Sigmoid colon (tissue), 7 donors: ENCODE measurements at regions of chr2 and their contacts with region 1.

Region 1: GRCh38 chr2:203014456-203015199 is at the start of gene NBEAL1:
- DNase-seq: peak; percentile 99
- H3K4me3 ChIP-seq: peak within 1 kb of the TSS; percentile 82 to 92 (median 87)
- H3K27ac ChIP-seq: peak within 1 kb of the TSS; percentile 84 to 96 (median 95)
- H3K4me1 ChIP-seq: peaks cover 0 to 46% (median 28%) of the 10 kb centered on the region in 4 donors
- H3K27me3 ChIP-seq: no peaks in the 10 kb centered on the region
- CTCF ChIP-seq: no peak
- EP300 ChIP-seq: peak in 2 of 4 donors; percentile 66 to 67
- POLR2A ChIP-seq: peak; percentile 85 to 87
- total RNA-seq, gene NBEAL1: 22.7 to 39.1 (median 25.8) TPM

Region 2: GRCh38 chr2:202780514-202781021 is 234.1 kb before region 1 on chr2:
- intact Hi-C with region 1: no loop called
- DNase-seq: no peak
- H3K4me3 ChIP-seq: no peak overlapping the region
- H3K27ac ChIP-seq: no peak overlapping the region
- H3K4me1 ChIP-seq: no peaks in the 10 kb centered on the region
- H3K27me3 ChIP-seq: no peaks in the 10 kb centered on the region
- CTCF ChIP-seq: no peak
- EP300 ChIP-seq: no peak
- POLR2A ChIP-seq: no peak

Region 3: DNA sequence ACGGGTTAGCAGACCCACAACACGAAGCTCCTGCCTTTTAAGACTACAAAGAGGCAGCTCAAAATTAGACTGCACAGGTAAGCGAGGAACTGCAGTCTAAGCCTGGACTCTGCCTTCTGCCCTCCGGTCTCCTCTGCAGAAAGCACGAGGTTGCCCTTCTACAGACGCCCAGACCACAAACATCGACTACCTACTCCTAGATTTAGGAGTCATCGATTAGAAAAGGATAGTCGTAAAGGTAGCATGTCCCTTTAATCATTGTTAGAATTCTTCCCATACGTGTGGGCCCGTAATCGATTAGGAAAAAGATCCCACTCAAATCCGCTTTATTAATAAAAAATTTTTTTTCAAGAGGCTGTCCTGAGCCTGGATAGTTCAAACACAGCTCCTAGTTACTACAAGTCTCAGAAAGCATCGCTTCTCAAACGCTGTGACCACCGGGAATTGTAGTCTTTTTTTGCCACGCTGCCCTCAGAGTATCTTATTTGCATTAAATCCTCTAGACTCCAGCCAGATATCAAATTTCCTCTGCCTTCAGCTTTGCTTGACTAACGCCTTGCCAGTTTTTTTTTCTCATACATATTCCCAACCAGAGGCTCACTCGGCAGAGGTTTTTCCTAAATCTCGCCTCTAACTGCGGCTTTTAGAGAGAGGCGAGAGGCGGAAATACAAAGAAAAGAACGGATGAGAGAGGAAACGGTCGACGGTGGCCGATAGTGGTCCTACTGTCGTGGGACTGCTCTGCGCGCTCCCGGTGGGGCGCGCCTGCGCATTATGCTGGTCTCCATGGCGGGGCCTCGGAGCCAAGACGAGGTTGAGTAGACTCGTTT is 102.9 kb before region 1 on chr2 and contains the starts of genes CARF and WDR12:
- intact Hi-C with region 1: loop called (anchors 5 kb)
- DNase-seq: peak; percentile 96
- H3K4me3 ChIP-seq: peak within 1 kb of the TSS; percentile 55 to 78 (median 62)
- H3K27ac ChIP-seq: peak within 1 kb of the TSS; percentile 83 to 88 (median 86)
- H3K4me1 ChIP-seq: peaks cover 0 to 29% (median 18%) of the 10 kb centered on the region in 4 donors
- H3K27me3 ChIP-seq: no peaks in the 10 kb centered on the region
- CTCF ChIP-seq: no peak
- EP300 ChIP-seq: no peak
- POLR2A ChIP-seq: peak; percentile 53 to 55
- total RNA-seq, gene CARF: 15.9 to 23.5 (median 18.9) TPM
- total RNA-seq, gene WDR12: 3.3 to 23.0 (median 10.9) TPM

Region 4: DNA sequence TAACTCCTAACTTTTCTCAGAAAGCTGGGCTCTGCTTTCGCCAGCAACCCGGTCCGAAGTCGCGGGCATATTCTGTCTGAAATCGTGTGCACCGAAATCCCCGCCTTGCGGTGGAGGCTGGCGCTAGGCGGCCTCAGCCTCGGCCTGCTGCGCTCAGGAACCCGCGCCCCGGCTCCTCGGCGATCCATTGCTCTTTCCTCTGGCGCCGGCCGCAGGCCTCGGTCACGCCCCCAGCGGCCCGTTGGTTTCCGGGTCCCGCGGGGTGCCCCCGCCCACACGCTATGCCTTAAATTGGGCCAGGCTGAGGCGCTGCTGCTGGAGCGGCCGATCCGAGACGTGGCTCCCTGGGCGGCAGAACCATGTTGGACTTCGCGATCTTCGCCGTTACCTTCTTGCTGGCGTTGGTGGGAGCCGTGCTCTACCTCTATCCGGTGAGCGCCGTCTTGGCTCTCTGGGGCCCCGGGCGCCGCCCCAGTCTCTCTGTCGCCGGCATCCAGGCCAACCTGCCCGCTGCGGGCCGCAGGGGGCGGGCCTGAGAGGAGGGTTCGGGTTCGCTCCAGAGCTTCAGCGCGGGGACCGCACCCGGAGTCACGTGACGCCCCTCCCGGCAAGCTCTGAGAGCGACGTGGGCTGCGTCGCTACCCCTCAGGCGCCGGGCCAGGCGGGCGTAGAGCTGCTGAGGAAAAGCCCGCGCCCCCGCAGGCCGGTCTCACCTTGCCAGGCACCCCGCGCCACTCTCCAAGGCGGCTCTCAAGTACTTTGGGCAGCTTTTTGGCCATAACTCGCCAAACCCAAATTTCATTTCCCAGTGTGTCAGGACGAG is 224.3 kb after region 1 on chr2 and contains the start of gene CYP20A1:
- intact Hi-C with region 1: loop called (anchors 2 kb)
- DNase-seq: peak; percentile 98
- H3K4me3 ChIP-seq: peak within 1 kb of the TSS; percentile 49 to 74 (median 68)
- H3K27ac ChIP-seq: peak within 1 kb of the TSS; percentile 91 to 95 (median 92)
- H3K4me1 ChIP-seq: peaks cover 0 to 25% (median 24%) of the 10 kb centered on the region in 4 donors
- H3K27me3 ChIP-seq: no peaks in the 10 kb centered on the region
- CTCF ChIP-seq: peak in 3 of 4 experiments; percentile 19 to 42 (median 40)
- EP300 ChIP-seq: peak in 2 of 4 donors; percentile 36 to 49
- POLR2A ChIP-seq: peak; percentile 63 to 72
- total RNA-seq, gene CYP20A1: 22.7 to 35.4 (median 28.2) TPM